MCF 10A (cell line): ENCODE measurements at regions of chr5 and their contacts with region 1.

Region 1: GRCh38 chr5:140632150-140633020 is 590 bp downstream of the CD14 start:
- DNase-seq: peak; percentile 85
- H3K4me3 Mint-ChIP-seq: peak overlapping the region; percentile 68
- H3K27ac Mint-ChIP-seq: no peak overlapping the region
- H3K4me1 Mint-ChIP-seq: peaks cover 30% of the 10 kb centered on the region
- H3K27me3 Mint-ChIP-seq: no peaks in the 10 kb centered on the region
- CTCF ChIP-seq: no peak

Region 2: DNA sequence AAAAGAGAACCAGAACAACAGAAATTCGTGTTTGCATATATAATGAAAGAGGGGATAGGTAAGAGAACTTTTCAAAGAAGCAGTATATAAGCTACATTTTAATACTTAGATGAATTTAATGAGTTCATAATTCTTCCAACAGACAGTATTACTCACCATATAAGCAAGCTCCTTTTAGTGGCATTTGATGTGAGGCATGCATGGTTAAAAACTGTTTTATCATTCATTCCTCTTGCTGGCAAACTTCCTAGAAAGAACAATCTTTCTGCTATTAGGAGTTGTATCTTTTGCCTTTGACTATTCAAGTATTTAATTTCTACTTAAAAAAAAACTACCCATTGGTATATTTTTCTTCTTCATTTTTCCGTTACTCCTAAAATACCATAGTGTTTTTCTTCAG is 150.6 kb before region 1 on chr5:
- CTCF ChIA-PET with region 1: no interaction called
- POLR2A ChIA-PET with region 1: no interaction called
- intact Hi-C with region 1: no loop called
- DNase-seq: no peak
- H3K4me3 Mint-ChIP-seq: no peak overlapping the region
- H3K27ac Mint-ChIP-seq: no peak overlapping the region
- H3K4me1 Mint-ChIP-seq: peaks cover 6% of the 10 kb centered on the region
- H3K27me3 Mint-ChIP-seq: no peaks in the 10 kb centered on the region
- CTCF ChIP-seq: no peak

Region 3: DNA sequence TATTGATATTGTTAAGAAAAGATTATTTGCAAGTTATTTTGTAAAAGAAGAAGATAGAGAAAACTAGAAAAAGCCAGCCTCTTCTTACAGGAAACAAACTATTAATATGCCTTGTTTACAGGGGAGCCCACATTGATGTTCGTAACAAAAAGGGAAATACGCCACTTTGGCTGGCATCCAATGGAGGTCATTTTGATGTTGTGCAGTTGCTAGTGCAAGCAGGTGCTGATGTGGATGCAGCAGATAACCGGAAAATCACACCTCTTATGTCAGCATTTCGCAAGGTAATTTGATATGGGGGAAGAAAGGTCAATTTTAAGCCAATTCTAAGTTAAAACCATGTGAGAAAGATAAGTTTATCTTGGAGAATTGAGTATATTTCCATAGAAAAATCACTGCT is 122.5 kb before region 1 on chr5:
- CTCF ChIA-PET with region 1: no interaction called
- POLR2A ChIA-PET with region 1: no interaction called
- intact Hi-C with region 1: no loop called
- DNase-seq: no peak
- H3K4me3 Mint-ChIP-seq: no peak overlapping the region
- H3K27ac Mint-ChIP-seq: no peak overlapping the region
- H3K4me1 Mint-ChIP-seq: no peaks in the 10 kb centered on the region
- H3K27me3 Mint-ChIP-seq: no peaks in the 10 kb centered on the region
- CTCF ChIP-seq: no peak

Region 4: DNA sequence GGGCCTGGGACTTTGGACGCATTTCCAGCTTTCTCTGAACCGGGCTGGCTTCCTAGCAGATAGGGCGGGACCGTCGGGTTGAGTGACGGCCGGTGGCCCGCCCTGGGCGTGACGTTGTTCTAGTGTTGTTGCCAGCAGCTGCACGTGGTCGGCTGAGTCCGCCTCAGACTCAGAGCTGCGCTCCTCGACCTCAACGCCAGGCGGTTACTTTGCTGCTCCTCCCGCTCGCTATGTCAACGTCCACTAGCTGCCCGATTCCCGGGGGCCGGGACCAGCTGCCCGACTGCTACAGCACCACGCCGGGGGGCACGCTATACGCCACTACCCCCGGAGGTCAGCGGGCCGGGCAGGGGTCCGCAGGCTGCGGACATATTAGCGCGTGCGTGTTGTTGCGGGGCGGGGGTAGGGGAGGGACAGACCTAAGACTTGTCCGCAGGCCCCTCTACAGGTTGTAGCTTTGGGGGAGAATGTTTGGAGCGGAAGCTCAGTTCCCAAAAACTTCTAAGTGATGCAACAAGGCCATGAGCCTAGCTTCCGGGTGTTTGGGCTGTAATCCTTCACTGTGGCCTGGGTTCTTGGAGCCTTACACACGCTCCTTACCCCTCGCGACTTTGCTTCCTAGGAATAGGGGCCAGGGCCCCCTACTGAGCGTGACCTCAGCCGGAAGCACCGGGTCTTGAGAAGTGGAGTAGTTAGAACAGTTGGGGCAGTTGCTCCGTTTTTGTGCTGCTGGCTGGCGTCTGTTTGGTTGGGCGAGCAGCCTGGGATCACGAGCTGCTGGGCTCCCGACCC is 84.7 kb before region 1 on chr5 and contains the start of gene EIF4EBP3:
- CTCF ChIA-PET with region 1: interaction called, 27 read pairs
- POLR2A ChIA-PET with region 1: interaction called, 40 read pairs
- intact Hi-C with region 1: loop called (anchors 1 kb)
- DNase-seq: peak; percentile 97
- H3K4me3 Mint-ChIP-seq: peak within 1 kb of the TSS; percentile 77
- H3K27ac Mint-ChIP-seq: peak within 1 kb of the TSS; percentile 80
- H3K4me1 Mint-ChIP-seq: peaks cover 27% of the 10 kb centered on the region
- H3K27me3 Mint-ChIP-seq: no peaks in the 10 kb centered on the region
- CTCF ChIP-seq: peak; percentile 74
- total RNA-seq, gene EIF4EBP3: 25.3 and 35.3 TPM in 2 replicates

Region 5: GRCh38 chr5:140557136-140557805 is 75.1 kb before region 1 on chr5 and contains the start of gene SRA1:
- CTCF ChIA-PET with region 1: interaction called, 7 read pairs
- POLR2A ChIA-PET with region 1: interaction called, 12 read pairs
- intact Hi-C with region 1: no loop called
- DNase-seq: peak; percentile 96
- H3K4me3 Mint-ChIP-seq: peak within 1 kb of the TSS; percentile 87
- H3K27ac Mint-ChIP-seq: peak within 1 kb of the TSS; percentile 91
- H3K4me1 Mint-ChIP-seq: peaks cover 38% of the 10 kb centered on the region
- H3K27me3 Mint-ChIP-seq: no peaks in the 10 kb centered on the region
- CTCF ChIP-seq: no peak
- total RNA-seq, gene SRA1: 105 and 107 TPM in 2 replicates

Region 6: GRCh38 chr5:140575309-140575708 is 57.1 kb before region 1 on chr5:
- CTCF ChIA-PET with region 1: interaction called, 41 read pairs
- POLR2A ChIA-PET with region 1: interaction called, 4 read pairs
- intact Hi-C with region 1: loop called (anchors 1 kb)
- DNase-seq: peak; percentile 92
- H3K4me3 Mint-ChIP-seq: no peak overlapping the region
- H3K27ac Mint-ChIP-seq: no peak overlapping the region
- H3K4me1 Mint-ChIP-seq: no peaks in the 10 kb centered on the region
- H3K27me3 Mint-ChIP-seq: no peaks in the 10 kb centered on the region
- CTCF ChIP-seq: peak; percentile 82

Region 7: GRCh38 chr5:140602147-140602546 is 30.2 kb before region 1 on chr5:
- CTCF ChIA-PET with region 1: interaction called, 5 read pairs
- POLR2A ChIA-PET with region 1: interaction called, 22 read pairs
- intact Hi-C with region 1: no loop called
- DNase-seq: no peak
- H3K4me3 Mint-ChIP-seq: peak overlapping the region; percentile 14
- H3K27ac Mint-ChIP-seq: peak overlapping the region; percentile 99
- H3K4me1 Mint-ChIP-seq: peaks cover 34% of the 10 kb centered on the region
- H3K27me3 Mint-ChIP-seq: no peaks in the 10 kb centered on the region
- CTCF ChIP-seq: no peak

Region 8: DNA sequence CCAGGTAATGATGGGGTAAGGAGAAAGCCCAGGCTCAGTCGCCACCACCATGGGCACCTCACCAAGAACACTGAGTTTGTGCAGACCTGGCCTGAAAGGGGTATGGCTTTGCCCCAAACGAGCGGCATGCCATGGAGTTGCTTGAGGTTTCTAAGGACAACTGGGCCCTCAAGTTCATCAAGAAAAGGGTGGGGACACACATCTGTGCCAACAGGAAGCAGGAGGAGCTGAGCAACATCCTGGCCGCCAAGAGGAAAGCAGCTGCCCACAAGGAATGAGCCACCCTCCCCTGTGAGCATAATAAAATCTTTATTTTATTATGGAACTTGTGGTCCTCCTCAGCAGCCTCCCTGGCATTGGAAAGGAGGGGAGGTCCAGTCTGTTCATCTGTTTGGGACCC is 23.3 kb before region 1 on chr5:
- CTCF ChIA-PET with region 1: interaction called, 3 read pairs
- POLR2A ChIA-PET with region 1: interaction called, 22 read pairs
- intact Hi-C with region 1: no loop called
- DNase-seq: peak; percentile 77
- H3K4me3 Mint-ChIP-seq: no peak overlapping the region
- H3K27ac Mint-ChIP-seq: peak overlapping the region; percentile 32
- H3K4me1 Mint-ChIP-seq: peaks cover 29% of the 10 kb centered on the region
- H3K27me3 Mint-ChIP-seq: no peaks in the 10 kb centered on the region
- CTCF ChIP-seq: no peak

Region 9: DNA sequence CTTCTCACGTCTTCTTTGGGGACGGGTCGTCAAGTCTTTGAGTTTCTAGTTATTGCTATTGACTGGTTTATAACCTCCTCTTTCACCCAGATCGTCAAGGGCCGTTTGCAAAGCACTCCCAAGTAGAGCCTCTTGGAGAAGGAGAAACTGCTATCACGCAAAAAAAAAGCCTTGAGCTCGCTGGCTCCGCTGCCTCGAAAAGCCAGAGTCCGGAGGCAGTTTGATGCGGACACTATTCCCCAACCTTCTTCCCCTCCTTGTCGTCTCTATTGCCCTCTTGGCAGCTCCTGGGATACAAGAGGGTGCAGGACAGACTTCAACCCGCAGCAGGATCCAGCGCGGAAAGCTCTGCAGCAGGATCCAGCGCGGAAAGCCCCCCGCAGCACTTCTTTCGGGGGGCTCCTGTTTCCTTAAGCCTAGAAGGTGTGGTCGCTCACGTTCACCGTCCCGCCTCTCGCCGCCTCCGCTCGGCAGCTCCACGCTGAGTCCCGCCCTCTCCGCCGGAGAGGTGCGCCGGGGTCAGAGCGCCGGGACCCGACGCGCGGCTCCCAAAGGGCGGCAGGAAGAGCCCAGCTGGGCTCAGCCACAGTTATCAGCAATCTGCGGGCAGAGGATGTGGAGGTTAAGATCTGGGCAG is 293.5 kb after region 1 on chr5 and contains the start of gene PCDHAC1:
- CTCF ChIA-PET with region 1: no interaction called
- POLR2A ChIA-PET with region 1: no interaction called
- intact Hi-C with region 1: no loop called
- DNase-seq: no peak
- H3K4me3 Mint-ChIP-seq: peak within 1 kb of the TSS; percentile 95
- H3K27ac Mint-ChIP-seq: peak within 1 kb of the TSS; percentile 85
- H3K4me1 Mint-ChIP-seq: peaks cover 25% of the 10 kb centered on the region
- H3K27me3 Mint-ChIP-seq: no peaks in the 10 kb centered on the region
- CTCF ChIP-seq: no peak
- total RNA-seq, gene PCDHAC1: 17.2 and 26.3 TPM in 2 replicates

Region 10: GRCh38 chr5:141172378-141173204 is 540.2 kb after region 1 on chr5 and contains the start of gene PCDHB7:
- CTCF ChIA-PET with region 1: no interaction called
- POLR2A ChIA-PET with region 1: no interaction called
- intact Hi-C with region 1: no loop called
- DNase-seq: peak; percentile 68
- H3K4me3 Mint-ChIP-seq: peak within 1 kb of the TSS; percentile 51
- H3K27ac Mint-ChIP-seq: peak within 1 kb of the TSS; percentile 7
- H3K4me1 Mint-ChIP-seq: no peaks in the 10 kb centered on the region
- H3K27me3 Mint-ChIP-seq: no peaks in the 10 kb centered on the region
- CTCF ChIP-seq: peak; percentile 59
- total RNA-seq, gene PCDHB7: 0.28 and 0.29 TPM in 2 replicates